Thyroid gland (tissue), 4 donors: ENCODE measurements at regions of chr12 and their contacts with region 1.

Region 1: GRCh38 chr12:55940065-55940732 is 9.2 kb downstream of the DGKA start:
- DNase-seq: peak; percentile 87 to 88
- H3K4me3 ChIP-seq: no peak overlapping the region
- H3K27ac ChIP-seq: peak overlapping the region in 2 of 3 donors; percentile 32 to 43
- H3K4me1 ChIP-seq: peaks cover 0 to 8% of the 10 kb centered on the region in 2 donors
- H3K27me3 ChIP-seq: no peaks in the 10 kb centered on the region
- CTCF ChIP-seq: peak; percentile 68 to 89 (median 82)
- POLR2A ChIP-seq: no peak

Region 2: GRCh38 chr12:55738123-55739024 is 201.8 kb before region 1 on chr12:
- intact Hi-C with region 1: loop called (anchors 2 kb)
- DNase-seq: peak; percentile 90 to 92
- H3K4me3 ChIP-seq: peak overlapping the region in 2 of 3 donors; percentile 29 to 66
- H3K27ac ChIP-seq: peak overlapping the region; percentile 69 to 82 (median 72)
- H3K4me1 ChIP-seq: peaks cover 9 to 24% of the 10 kb centered on the region in 2 donors
- H3K27me3 ChIP-seq: no peaks in the 10 kb centered on the region
- CTCF ChIP-seq: peak; percentile 81 to 98 (median 88)
- POLR2A ChIP-seq: peak in 1 of 2 donors; percentile 16

Region 3: DNA sequence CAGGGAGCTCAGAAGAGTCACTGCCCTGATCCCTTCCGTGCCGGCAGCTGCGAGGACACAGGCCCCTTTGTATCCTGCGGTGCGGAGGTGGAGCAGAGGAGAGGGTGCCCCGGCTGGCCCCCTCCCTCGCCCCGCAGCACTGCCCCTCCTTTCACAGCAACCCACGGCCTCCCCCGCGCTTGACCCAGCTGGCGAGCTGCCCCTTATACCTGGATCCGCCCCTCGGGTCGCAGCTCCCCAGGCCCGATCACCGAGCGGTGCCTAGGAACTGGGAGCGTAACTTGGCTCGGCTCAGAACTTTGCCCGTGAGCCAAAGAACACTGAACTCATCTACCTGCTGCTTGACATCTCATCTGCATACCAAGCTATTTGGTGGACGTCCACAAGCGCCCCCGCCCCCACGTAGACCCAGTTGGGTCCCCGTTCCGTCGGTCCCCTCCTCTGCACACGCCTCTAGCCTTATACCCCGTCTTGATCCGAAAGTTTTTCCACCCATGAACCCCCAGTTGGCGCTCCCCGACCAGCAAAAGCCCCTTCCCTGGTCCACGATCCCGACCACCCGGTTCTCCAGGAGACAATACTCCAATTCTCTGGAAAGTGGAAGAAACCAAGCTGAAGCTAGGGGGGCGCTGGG is 110.1 kb before region 1 on chr12:
- intact Hi-C with region 1: loop called (anchors 5 kb)
- DNase-seq: peak; percentile 70 to 73
- H3K4me3 ChIP-seq: peak overlapping the region; percentile 30 to 93 (median 71)
- H3K27ac ChIP-seq: peak overlapping the region; percentile 88 to 91 (median 90)
- H3K4me1 ChIP-seq: peaks cover 42 to 48% of the 10 kb centered on the region in 2 donors
- H3K27me3 ChIP-seq: no peaks in the 10 kb centered on the region
- CTCF ChIP-seq: no peak
- POLR2A ChIP-seq: no peak

Region 4: GRCh38 chr12:56321027-56321426 is 380.8 kb after region 1 on chr12:
- intact Hi-C with region 1: no loop called
- DNase-seq: no peak
- H3K4me3 ChIP-seq: no peak overlapping the region
- H3K27ac ChIP-seq: no peak overlapping the region
- H3K4me1 ChIP-seq: peaks cover 0 to 5% of the 10 kb centered on the region in 2 donors
- H3K27me3 ChIP-seq: no peaks in the 10 kb centered on the region
- CTCF ChIP-seq: no peak
- POLR2A ChIP-seq: no peak